Activated T-helper 1 cell treated with anti-CD3 and anti-CD28 coated beads, Interleukin-12 subunit alpha, Interleukin-12 subunit beta, Interleukin-2, Interleukin-4 antibody, amounts not matched to agents 30 ng/mL and 10 ng/mL and 1 ng/mL, durations not matched to agents 14 hours and 24 hours and 36 hours (primary cell): ENCODE measurements at regions of chr2 and their contacts with region 1.

Region 1: GRCh38 chr2:219155054-219155644 is 5.5 kb downstream of the NHEJ1 start:
- DNase-seq: peak; percentile 19
- H3K4me3 Mint-ChIP-seq: no peak overlapping the region
- H3K27ac Mint-ChIP-seq: no peak overlapping the region
- H3K4me1 Mint-ChIP-seq: peaks cover 8% of the 10 kb centered on the region
- H3K27me3 Mint-ChIP-seq: no peaks in the 10 kb centered on the region

Region 2: DNA sequence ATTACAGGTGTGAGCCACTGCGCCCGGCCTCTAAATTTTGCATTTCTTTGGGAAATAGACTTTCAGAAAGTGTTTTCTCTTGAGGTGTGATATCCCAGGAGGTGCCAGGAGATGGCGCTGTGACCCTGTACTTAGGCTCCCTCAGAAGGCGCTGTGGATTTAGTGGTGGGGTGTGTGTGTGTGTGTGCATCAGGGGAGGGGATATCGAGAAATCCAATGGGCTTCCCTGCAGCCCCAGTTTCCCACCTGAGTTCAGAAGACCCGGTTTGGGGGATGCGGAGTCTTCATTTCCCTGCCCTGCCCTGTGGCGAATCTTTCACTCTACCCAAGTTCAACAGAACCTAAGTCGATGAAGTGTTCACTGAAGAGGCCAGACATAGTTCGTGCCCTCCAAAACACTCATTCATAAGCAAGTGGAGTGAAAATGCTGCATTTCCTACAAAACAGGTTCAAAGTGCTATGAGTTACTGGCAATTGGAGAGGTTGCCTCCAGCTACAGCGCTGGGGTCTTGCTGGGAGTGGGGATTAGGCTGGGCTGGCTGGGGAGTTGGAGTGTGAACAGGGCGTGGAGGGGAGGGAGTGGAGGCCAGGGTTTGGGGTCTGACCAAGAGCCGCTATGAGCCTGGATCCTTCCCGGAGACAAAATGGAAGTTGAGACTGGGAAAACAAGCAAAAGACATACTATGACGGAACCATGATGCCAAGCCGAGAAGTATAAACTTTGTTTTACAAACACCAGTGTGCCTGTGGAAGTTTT is 302.1 kb before region 1 on chr2:
- intact Hi-C with region 1: loop called (anchors 10 kb)
- DNase-seq: peak; percentile 18
- H3K4me3 Mint-ChIP-seq: no peak overlapping the region
- H3K27ac Mint-ChIP-seq: no peak overlapping the region
- H3K4me1 Mint-ChIP-seq: no peaks in the 10 kb centered on the region
- H3K27me3 Mint-ChIP-seq: peaks cover 63% of the 10 kb centered on the region

Region 3: GRCh38 chr2:218995972-218996711 is 159.0 kb before region 1 on chr2:
- intact Hi-C with region 1: loop called (anchors 1 kb)
- DNase-seq: peak; percentile 63
- H3K4me3 Mint-ChIP-seq: peak overlapping the region; percentile 2
- H3K27ac Mint-ChIP-seq: no peak overlapping the region
- H3K4me1 Mint-ChIP-seq: no peaks in the 10 kb centered on the region
- H3K27me3 Mint-ChIP-seq: peaks cover 71% of the 10 kb centered on the region

Region 4: DNA sequence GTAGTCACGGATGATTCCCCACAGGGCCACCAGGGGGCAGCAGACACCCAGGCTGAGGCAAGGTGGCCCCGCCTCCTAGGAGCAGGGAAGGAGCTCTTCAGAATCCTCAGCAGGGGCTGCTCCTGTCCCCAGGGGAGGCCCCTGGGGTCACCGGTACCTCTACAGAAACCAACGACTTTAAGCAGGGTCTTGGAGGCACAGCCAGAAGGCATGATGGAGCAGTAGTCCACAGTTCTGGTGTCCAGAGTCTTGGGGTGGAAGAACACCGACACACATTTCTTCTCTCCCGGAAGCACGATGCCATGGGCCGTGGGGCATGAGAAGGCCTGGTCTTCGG is 125.4 kb before region 1 on chr2:
- intact Hi-C with region 1: loop called (anchors 1 kb)
- DNase-seq: peak; percentile 63
- H3K4me3 Mint-ChIP-seq: no peak overlapping the region
- H3K27ac Mint-ChIP-seq: no peak overlapping the region
- H3K4me1 Mint-ChIP-seq: no peaks in the 10 kb centered on the region
- H3K27me3 Mint-ChIP-seq: peaks cover 12% of the 10 kb centered on the region

Region 5: DNA sequence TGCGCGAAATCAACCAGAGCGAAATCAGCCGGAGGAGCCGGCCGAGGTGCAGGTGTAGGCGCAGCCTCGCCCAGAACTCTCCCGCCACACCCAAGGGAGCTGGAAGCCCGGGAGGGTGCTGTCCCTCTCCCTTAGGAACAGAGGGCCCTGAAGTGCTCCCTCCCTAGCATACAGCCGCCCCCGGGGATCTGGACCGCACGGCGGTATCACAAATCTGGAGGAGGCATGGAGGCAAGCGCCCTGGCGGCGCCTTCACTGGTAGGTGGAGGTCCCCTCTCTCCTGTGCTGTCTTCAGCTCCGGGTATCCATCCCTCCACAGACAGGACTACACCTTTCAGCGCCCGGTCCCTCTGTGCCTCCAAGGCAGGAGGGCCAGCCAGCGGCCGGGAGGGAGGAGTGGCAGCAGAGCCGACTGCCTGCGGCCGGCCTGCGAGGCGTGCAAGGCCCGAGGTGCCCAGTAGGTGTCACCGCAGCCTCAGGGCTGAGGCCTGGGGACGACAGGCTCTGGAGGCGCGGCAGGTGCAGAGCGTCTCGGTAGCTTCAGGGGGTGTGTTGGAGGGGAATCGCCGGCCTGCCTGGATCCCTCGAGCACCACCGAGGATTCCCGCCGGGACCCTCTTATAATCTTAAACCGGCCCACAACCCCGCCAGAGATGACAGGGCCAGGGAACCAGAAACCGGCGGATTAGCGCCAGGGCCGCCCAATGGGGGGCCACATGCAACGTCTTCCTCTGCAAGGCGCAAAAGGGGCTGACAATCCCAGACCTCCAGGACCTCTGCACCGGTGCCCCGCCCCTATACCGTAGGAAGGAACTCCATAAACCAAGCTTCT is 97.2 kb before region 1 on chr2:
- intact Hi-C with region 1: loop called (anchors 1 kb)
- DNase-seq: peak; percentile 68
- H3K4me3 Mint-ChIP-seq: peak overlapping the region; percentile 30
- H3K27ac Mint-ChIP-seq: no peak overlapping the region
- H3K4me1 Mint-ChIP-seq: no peaks in the 10 kb centered on the region
- H3K27me3 Mint-ChIP-seq: peaks cover 60% of the 10 kb centered on the region

Region 6: GRCh38 chr2:219073413-219074129 is 81.6 kb before region 1 on chr2:
- intact Hi-C with region 1: loop called (anchors 1 kb)
- DNase-seq: no peak
- H3K4me3 Mint-ChIP-seq: no peak overlapping the region
- H3K27ac Mint-ChIP-seq: no peak overlapping the region
- H3K4me1 Mint-ChIP-seq: no peaks in the 10 kb centered on the region
- H3K27me3 Mint-ChIP-seq: no peaks in the 10 kb centered on the region